HEK293 (cell line): ENCODE measurements at regions of chr3 and their contacts with region 1.

Region 1: GRCh38 chr3:190883973-190884832 is 21.7 kb upstream of the GMNC start:
- H3K4me3 ChIP-seq: no peak overlapping the region
- H3K27ac ChIP-seq: no peak overlapping the region
- H3K4me1 ChIP-seq: no peaks in the 10 kb centered on the region
- CTCF ChIP-seq: no peak

Region 2: GRCh38 chr3:190811775-190812480 is 72.3 kb before region 1 on chr3:
- CTCF ChIA-PET with region 1: interaction called, 14 read pairs
- POLR2A ChIA-PET with region 1: no interaction called
- H3K4me3 ChIP-seq: no peak overlapping the region
- H3K27ac ChIP-seq: no peak overlapping the region
- H3K4me1 ChIP-seq: no peaks in the 10 kb centered on the region; the same call in 1 of the 2 replicates
- CTCF ChIP-seq: no peak

Region 3: DNA sequence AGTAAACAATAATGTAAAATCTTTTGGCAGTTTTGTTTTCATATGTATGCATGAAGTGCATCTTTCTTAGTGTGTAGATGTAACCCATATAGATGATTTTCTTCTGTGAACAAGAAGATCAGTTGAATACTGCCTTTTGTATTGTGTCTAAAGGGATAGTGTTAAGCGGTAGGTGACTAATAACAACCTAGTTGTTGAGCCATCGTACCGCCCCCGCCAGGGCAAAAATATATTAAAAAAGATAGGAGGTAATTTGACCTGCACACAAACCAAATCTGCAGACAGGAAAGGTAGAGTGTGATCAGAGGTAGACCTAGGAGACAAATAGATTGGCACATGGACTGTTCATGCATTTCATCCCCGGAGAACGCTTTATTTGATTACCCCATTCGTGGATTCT is 18.4 kb before region 1 on chr3:
- CTCF ChIA-PET with region 1: interaction called, 26 read pairs
- POLR2A ChIA-PET with region 1: no interaction called
- H3K4me3 ChIP-seq: no peak overlapping the region
- H3K27ac ChIP-seq: no peak overlapping the region
- H3K4me1 ChIP-seq: peaks cover 6% of the 10 kb centered on the region; the same call in 1 of the 2 replicates
- CTCF ChIP-seq: no peak

Region 4: GRCh38 chr3:190989218-190989617 is 105.0 kb after region 1 on chr3:
- CTCF ChIA-PET with region 1: no interaction called
- POLR2A ChIA-PET with region 1: no interaction called
- H3K4me3 ChIP-seq: no peak overlapping the region
- H3K27ac ChIP-seq: no peak overlapping the region
- H3K4me1 ChIP-seq: no peaks in the 10 kb centered on the region
- CTCF ChIP-seq: no peak